Activated CD4-positive, alpha-beta T cell treated with anti-CD3 and anti-CD28 coated beads for 36 hours (primary cell): ENCODE measurements at regions of chr3 and their contacts with region 1.

Region 1: DNA sequence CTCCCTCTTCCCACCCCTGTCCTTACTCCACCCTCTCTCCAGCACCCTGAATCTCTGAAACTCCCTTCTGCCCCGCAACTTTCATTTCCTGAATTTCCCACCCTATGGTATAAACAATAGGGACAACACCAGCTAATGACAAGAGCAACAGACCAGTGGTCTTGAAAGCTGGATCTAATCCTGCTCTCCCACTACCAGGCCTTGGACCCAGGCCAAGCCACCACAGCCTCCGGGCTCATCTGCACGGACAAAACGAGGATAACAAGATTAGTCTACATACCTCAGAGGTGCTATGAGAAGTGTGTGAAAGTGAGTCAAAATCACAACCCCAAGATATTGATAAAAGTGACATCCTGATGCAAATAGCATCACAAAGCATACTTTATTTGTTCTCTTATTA is 128.6 kb downstream of the ERC2 start:
- DNase-seq: no peak
- ATAC-seq: no peak
- H3K4me3 Mint-ChIP-seq: no peak overlapping the region
- H3K27ac Mint-ChIP-seq: no peak overlapping the region
- H3K4me1 Mint-ChIP-seq: no peaks in the 10 kb centered on the region
- H3K27me3 Mint-ChIP-seq: peaks cover 9% of the 10 kb centered on the region

Region 2: DNA sequence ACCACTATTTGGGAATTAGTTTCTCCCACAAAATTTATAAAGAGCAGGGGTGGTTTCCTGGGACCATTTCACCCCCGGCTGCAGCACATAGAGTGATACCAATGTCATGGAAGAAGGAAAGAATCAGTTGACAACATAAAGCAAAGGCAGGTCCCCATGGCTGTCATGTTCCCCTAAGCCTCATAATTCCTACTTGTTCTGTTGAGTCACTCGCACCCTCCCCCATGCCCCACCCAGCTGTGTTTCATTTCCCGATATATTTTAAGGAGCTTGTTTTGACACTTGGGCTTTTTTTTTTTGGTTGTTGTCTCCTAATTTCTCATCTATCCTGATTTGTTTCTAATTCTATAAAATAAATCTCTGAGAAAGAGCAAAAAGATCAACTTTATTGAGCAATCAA is 103.7 kb after region 1 on chr3:
- CTCF ChIA-PET with region 1: interaction called, 6 read pairs
- POLR2A ChIA-PET with region 1: no interaction called
- intact Hi-C with region 1: loop called (anchors 1 to 2 kb)
- DNase-seq: no peak
- ATAC-seq: no peak
- H3K4me3 Mint-ChIP-seq: no peak overlapping the region
- H3K27ac Mint-ChIP-seq: no peak overlapping the region
- H3K4me1 Mint-ChIP-seq: no peaks in the 10 kb centered on the region
- H3K27me3 Mint-ChIP-seq: peaks cover 11% of the 10 kb centered on the region

Region 3: DNA sequence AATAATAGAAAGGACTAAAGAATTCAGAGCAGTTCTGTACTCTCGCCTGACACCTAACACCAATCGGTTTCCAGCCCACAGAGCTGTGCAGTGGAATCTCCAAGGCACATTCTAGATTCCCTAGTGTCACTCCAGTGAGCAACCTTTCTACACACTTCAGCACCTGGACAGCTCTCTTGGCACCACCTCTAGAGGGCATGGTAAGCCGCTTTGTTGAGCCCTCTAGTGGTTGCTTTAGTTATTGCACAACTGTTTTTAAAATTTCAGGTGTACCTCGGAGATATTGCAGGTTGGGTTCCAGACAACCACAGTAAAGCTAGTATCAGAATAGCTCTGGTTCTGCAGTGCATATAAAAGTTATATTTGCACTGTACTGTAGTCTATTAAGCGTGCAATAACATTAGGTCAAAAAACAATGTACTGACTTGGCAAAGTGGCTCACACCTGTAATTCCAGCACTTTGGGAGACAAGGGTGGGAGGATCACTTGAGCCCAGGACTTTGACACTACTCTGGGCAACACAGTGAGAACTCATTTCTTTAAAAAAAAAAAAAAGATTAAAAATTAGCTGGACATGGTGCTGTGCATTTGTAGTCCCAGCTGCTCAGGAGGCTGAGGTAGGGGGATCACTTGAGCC is 155.1 kb after region 1 on chr3:
- CTCF ChIA-PET with region 1: interaction called, 3 read pairs
- POLR2A ChIA-PET with region 1: no interaction called
- intact Hi-C with region 1: loop called (anchors 1 kb)
- DNase-seq: peak; percentile 83
- ATAC-seq: peak; percentile 86
- H3K4me3 Mint-ChIP-seq: no peak overlapping the region
- H3K27ac Mint-ChIP-seq: no peak overlapping the region
- H3K4me1 Mint-ChIP-seq: no peaks in the 10 kb centered on the region
- H3K27me3 Mint-ChIP-seq: peaks cover 16% of the 10 kb centered on the region